Heart left ventricle (tissue), 16 donors: ENCODE measurements at regions of chr11 and their contacts with region 1.

Region 1: DNA sequence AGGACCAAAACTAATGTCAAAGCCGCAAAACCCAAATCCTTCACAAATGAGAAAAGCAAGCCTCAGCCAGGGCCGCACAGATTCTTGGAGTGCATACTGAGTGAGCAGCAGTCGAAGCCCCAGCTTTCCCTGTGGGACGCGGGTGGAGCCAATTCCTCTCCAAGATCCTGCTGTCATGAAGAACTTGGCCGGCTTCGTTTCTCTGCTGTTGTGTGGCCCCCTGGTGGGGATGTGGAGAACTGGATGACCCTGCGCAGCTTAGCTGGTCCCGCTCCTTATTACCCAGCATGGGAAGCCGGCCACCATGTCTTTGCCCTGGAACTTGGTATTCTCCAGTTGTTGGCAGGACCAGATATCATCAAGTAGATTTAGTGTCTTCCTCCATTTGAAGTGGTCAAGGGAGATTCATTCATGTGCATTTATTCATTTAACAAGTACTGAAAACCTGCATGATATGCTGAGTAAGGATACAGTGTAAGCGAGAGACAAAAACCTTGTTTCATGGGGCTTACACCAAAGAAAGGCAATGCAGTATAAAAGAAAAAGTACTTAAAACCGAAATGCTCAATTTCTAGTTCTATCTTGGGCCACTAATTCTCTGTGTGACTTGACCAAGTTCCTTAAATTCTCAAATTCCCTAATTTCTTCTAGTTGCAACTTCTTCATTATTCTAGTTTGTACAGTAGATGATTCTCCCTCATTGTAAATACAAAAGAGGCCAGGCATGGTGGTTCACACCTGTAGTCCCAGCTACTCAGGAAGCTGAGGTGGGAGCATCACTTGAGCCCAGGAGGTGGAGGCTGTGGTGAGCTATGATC is 56.7 kb upstream of the CRTAM start:
- DNase-seq: peak; percentile 89 to 92 (median 90)
- ATAC-seq: peak; percentile 89 to 98 (median 96)
- H3K4me3 ChIP-seq: no peak overlapping the region
- H3K27ac ChIP-seq: peak overlapping the region in 1 of 12 donors; percentile 28
- H3K4me1 ChIP-seq: peaks cover 0 to 46% (median 16%) of the 10 kb centered on the region in 12 donors
- H3K27me3 ChIP-seq: peaks cover 0 to 4% (median 0%) of the 10 kb centered on the region in 9 donors
- CTCF ChIP-seq: peak; percentile 83 to 97 (median 94)
- POLR2A ChIP-seq: no peak

Region 2: DNA sequence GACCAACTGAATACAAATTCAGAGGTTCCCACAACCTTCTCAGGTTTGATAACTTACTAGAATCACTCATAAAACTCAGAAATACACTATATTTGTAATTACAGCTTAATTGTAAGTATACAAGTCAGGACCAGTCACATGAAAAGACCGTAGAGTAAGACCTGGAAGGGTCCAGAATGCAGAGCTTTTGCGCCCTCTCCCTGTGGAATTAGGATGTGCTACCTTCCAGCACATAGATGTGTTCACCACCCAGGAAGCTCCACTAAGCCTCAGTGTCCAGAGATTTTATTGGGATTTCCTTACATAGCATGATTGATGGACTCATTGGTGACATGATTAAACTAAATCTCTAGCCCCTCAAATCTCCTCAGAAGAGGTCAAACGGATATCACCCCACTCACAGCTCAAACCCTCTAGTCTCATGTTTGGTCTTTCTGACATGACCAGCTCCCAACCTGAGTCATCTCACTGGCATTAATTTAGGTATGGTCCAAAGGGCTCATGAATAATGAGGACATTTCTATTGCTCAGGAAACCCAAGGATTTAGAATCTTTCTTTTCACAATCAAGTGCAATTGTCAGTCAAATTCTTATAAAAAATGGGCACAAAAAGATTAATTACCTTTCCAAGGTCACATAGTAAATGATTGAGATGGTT is 203.3 kb before region 1 on chr11:
- intact Hi-C with region 1: loop called in 9 of 10 experiments (anchors 1 to 5 kb)
- DNase-seq: no peak
- ATAC-seq: no peak
- H3K4me3 ChIP-seq: no peak overlapping the region
- H3K27ac ChIP-seq: no peak overlapping the region
- H3K4me1 ChIP-seq: peaks cover 0 to 5% (median 0%) of the 10 kb centered on the region in 12 donors
- H3K27me3 ChIP-seq: no peaks in the 10 kb centered on the region
- CTCF ChIP-seq: no peak
- POLR2A ChIP-seq: no peak

Region 3: DNA sequence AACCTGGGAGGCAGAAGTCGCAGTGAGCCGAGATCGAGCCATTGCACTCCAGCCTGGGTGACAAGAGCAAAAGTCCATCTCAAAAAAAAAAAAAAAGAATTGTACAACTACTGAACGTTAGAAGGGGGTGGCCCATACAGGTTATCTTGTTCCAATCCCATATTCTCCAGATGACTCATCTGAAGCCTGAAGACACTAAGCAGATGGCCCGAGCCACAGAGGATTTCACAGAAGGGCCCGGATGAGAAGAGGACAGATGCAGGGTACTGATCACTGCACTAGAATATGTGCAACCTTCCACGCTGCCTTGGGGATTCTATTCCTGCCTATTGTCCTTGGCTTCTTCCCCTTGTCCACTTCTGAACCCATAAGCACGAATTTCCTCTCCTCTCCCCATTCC is 196.9 kb before region 1 on chr11:
- intact Hi-C with region 1: loop called in 9 of 10 experiments (anchors 1 to 5 kb)
- DNase-seq: no peak
- ATAC-seq: no peak
- H3K4me3 ChIP-seq: no peak overlapping the region
- H3K27ac ChIP-seq: no peak overlapping the region
- H3K4me1 ChIP-seq: peaks cover 0 to 5% (median 0%) of the 10 kb centered on the region in 12 donors
- H3K27me3 ChIP-seq: peaks cover 0 to 3% (median 0%) of the 10 kb centered on the region in 9 donors
- CTCF ChIP-seq: no peak
- POLR2A ChIP-seq: no peak

Region 4: GRCh38 chr11:122634497-122634896 is 147.1 kb before region 1 on chr11:
- intact Hi-C with region 1: loop called (anchors 1 to 5 kb)
- DNase-seq: peak in 1 of 5 donors; percentile 48
- ATAC-seq: peak in 2 of 4 donors; percentile 49 to 78
- H3K4me3 ChIP-seq: no peak overlapping the region
- H3K27ac ChIP-seq: no peak overlapping the region
- H3K4me1 ChIP-seq: peaks cover 0 to 3% (median 0%) of the 10 kb centered on the region in 12 donors
- H3K27me3 ChIP-seq: peaks cover 0 to 14% (median 0%) of the 10 kb centered on the region in 9 donors
- CTCF ChIP-seq: no peak
- POLR2A ChIP-seq: no peak

Region 5: DNA sequence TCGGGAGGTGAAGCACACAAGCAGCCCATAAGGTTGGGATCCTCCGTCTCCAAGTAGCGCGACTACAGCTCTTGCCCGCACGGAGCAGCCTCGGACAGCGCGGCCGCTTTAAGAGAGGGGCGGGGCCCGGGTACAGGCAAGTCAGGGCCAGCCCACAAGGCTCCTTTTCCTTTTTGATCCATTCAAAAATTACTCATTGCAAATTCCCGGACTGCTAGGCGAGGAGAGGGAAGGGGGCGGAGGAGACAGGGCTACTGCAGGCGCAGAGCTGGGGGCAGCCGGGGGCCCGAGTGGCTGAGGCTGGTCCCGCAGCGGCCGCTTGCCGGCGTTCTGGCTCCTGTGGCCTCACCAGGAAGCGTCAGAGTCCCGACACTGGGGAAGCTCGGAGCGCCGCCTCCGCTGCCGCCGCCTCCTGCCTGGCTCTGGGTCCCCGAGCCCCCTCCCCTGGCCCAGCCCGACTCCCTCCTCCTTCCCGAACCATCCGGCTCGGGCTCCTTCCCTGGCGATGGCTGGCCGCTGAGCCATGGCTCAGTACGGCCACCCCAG is 126.0 kb before region 1 on chr11 and contains the start of gene UBASH3B:
- intact Hi-C with region 1: loop called in 3 of 10 experiments (anchors 5 to 10 kb)
- DNase-seq: peak; percentile 75 to 87 (median 84)
- ATAC-seq: peak; percentile 77 to 92 (median 90)
- H3K4me3 ChIP-seq: peak within 1 kb of the TSS; percentile 59 to 93 (median 80)
- H3K27ac ChIP-seq: peak within 1 kb of the TSS; percentile 48 to 92 (median 84)
- H3K4me1 ChIP-seq: peaks cover 0 to 54% (median 11%) of the 10 kb centered on the region in 12 donors
- H3K27me3 ChIP-seq: peaks cover 0 to 8% (median 0%) of the 10 kb centered on the region in 9 donors
- CTCF ChIP-seq: peak in 2 of 12 donors; percentile 7 to 31
- POLR2A ChIP-seq: peak in 1 of 2 donors; percentile 45
- total RNA-seq, gene UBASH3B: 1.3 to 19.0 (median 1.7) TPM

Region 6: GRCh38 chr11:122853971-122854446 is 72.4 kb after region 1 on chr11:
- intact Hi-C with region 1: loop called in 1 of 10 experiments (anchors 5 kb)
- DNase-seq: peak in 2 of 5 donors; percentile 45 to 51
- ATAC-seq: no peak
- H3K4me3 ChIP-seq: no peak overlapping the region
- H3K27ac ChIP-seq: no peak overlapping the region
- H3K4me1 ChIP-seq: peaks cover 0 to 18% (median 0%) of the 10 kb centered on the region in 12 donors
- H3K27me3 ChIP-seq: peaks cover 0 to 14% (median 0%) of the 10 kb centered on the region in 9 donors
- CTCF ChIP-seq: peak; percentile 65 to 84 (median 78)
- POLR2A ChIP-seq: no peak